Panc1 (cell line): ENCODE measurements at regions of chr6 and their contacts with region 1.

Region 1: GRCh38 chr6:71411882-71412281 is 123.3 kb downstream of the OGFRL1 start:
- DNase-seq: no peak
- ATAC-seq: no peak
- H3K4me3 ChIP-seq: peak overlapping the region in 1 of 2 experiments; percentile 34; a peak in 3 of 4 replicates
- H3K27ac ChIP-seq: peak overlapping the region; percentile 100
- H3K4me1 ChIP-seq: peaks cover 98% of the 10 kb centered on the region
- H3K27me3 ChIP-seq: no peaks in the 10 kb centered on the region
- CTCF ChIP-seq: no peak

Region 2: DNA sequence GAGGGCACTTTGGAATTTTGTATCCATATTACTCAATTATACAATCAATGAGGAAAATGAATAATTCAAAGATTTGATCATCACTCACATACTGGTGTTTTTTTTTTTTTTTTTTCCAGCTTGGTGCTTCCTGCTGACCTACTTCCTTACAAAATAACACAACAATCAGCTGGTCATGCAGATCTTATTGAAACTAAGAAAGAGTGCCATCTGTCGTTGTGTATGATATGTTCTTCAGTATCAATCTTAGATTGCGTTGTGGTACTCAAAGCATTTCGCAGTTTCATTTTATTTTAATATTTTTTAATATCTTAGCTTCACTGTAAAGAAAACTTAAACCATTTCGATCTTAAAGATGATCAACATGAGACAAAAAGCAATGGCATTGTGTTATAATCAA is 32.3 kb after region 1 on chr6:
- CTCF ChIA-PET with region 1: interaction called, 11 read pairs
- POLR2A ChIA-PET with region 1: no interaction called
- in situ Hi-C with region 1: no loop called
- intact Hi-C with region 1: no loop called
- DNase-seq: no peak
- ATAC-seq: peak; percentile 79; the same call in 1 of the 2 replicates
- H3K4me3 ChIP-seq: no peak overlapping the region
- H3K27ac ChIP-seq: peak overlapping the region; percentile 18; the same call in 1 of the 2 replicates
- H3K4me1 ChIP-seq: no peaks in the 10 kb centered on the region
- H3K27me3 ChIP-seq: no peaks in the 10 kb centered on the region
- CTCF ChIP-seq: peak; percentile 48; the same call in 1 of the 2 replicates